CD8-positive, alpha-beta T cell (primary cell): ENCODE measurements at regions of chr3 and their contacts with region 1.

Region 1: DNA sequence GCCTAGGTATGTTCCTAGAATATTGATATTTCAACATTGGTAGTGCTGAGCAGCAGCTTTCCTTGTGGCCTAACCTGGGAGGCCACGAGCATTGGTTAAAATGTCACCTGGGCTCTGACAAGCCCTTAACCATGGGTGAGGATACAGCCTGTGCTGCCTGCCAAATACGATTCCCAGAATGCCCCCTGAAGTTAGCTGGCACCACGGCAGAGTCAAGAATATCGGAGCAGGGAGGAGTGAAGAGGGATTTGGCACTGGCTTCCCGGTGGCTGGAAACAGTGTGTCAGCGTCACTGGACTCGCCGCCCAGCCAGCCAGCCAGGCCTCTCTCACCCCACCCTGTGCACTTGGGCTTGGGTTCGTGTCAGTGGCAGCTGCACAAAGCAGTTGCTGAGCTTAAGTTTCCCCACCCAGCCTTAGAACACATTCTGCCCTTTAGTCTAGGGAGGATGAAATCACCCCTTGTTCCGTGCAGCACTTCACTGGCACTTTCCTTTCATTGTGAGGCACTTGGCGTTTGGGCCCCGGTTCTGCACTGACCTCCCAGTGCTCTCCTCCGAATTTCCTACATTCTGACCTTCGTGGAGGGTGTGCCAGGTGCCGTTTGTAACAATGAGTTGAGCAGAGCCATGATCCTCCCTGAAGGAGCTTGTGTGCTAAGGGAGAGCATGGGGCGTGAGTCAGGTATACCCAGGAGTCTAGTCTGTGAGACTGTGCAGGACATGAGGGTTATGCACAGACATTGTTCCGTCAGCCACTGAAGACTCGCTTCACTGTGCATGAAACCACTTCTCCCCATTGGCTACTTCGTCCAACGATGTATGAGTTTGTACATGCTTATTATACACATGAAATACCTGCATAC is 152.8 kb upstream of the BHLHE40 start:
- DNase-seq: no peak
- ATAC-seq: no peak
- H3K4me3 ChIP-seq: peak overlapping the region in 1 of 2 experiments; percentile 0
- H3K4me3 Mint-ChIP-seq: peak overlapping the region; percentile 64
- H3K27ac ChIP-seq: no peak overlapping the region
- H3K27ac Mint-ChIP-seq: no peak overlapping the region
- H3K4me1 ChIP-seq: peaks cover 82% of the 10 kb centered on the region
- H3K4me1 Mint-ChIP-seq: peaks cover 94% of the 10 kb centered on the region
- H3K27me3 ChIP-seq: no peaks in the 10 kb centered on the region
- H3K27me3 Mint-ChIP-seq: no peaks in the 10 kb centered on the region
- CTCF ChIP-seq: no peak

Region 2: GRCh38 chr3:4722103-4722502 is 104.4 kb before region 1 on chr3:
- CTCF ChIA-PET with region 1: no interaction called
- POLR2A ChIA-PET with region 1: no interaction called
- intact Hi-C with region 1: no loop called
- DNase-seq: peak in 2 of 9 experiments; percentile 38 to 52
- ATAC-seq: no peak
- H3K4me3 ChIP-seq: no peak overlapping the region
- H3K4me3 Mint-ChIP-seq: no peak overlapping the region
- H3K27ac ChIP-seq: no peak overlapping the region
- H3K27ac Mint-ChIP-seq: no peak overlapping the region
- H3K4me1 ChIP-seq: no peaks in the 10 kb centered on the region
- H3K4me1 Mint-ChIP-seq: no peaks in the 10 kb centered on the region
- H3K27me3 ChIP-seq: no peaks in the 10 kb centered on the region
- H3K27me3 Mint-ChIP-seq: no peaks in the 10 kb centered on the region
- CTCF ChIP-seq: no peak

Region 3: DNA sequence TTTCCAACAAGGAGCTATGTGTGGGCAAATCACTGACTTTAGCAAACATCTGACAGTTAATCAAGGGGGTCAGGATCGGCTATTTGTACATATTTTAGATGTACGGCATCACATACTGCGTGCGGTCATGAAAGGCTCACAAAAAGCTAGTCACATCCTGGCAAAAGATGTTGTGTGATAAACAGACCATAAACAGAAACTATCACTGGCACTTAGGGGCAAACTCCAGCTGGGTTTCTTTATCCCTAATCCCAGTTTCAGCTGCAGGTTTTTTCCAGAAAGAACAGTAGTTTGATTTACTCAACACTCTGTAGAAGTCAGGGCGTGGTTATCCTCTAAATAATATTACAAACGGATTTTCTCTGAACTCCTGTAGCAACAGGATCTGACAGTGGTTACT is 40.4 kb after region 1 on chr3:
- CTCF ChIA-PET with region 1: interaction called, 3 read pairs
- POLR2A ChIA-PET with region 1: interaction called, 3 read pairs
- intact Hi-C with region 1: loop called in 1 of 2 experiments (anchors 5 kb)
- DNase-seq: peak in 2 of 9 experiments; percentile 47 to 61
- ATAC-seq: no peak
- H3K4me3 ChIP-seq: no peak overlapping the region
- H3K4me3 Mint-ChIP-seq: peak overlapping the region; percentile 84
- H3K27ac ChIP-seq: peak overlapping the region; percentile 67 to 83
- H3K27ac Mint-ChIP-seq: peak overlapping the region; percentile 94
- H3K4me1 ChIP-seq: peaks cover 25% of the 10 kb centered on the region
- H3K4me1 Mint-ChIP-seq: peaks cover 34% of the 10 kb centered on the region
- H3K27me3 ChIP-seq: no peaks in the 10 kb centered on the region
- H3K27me3 Mint-ChIP-seq: no peaks in the 10 kb centered on the region
- CTCF ChIP-seq: no peak

Region 4: GRCh38 chr3:5016218-5017161 is 190.0 kb after region 1 on chr3:
- CTCF ChIA-PET with region 1: interaction called, 3 read pairs
- POLR2A ChIA-PET with region 1: no interaction called
- intact Hi-C with region 1: loop called in 1 of 2 experiments (anchors 2 kb)
- DNase-seq: peak in 8 of 9 experiments; percentile 32 to 77 (median 58)
- ATAC-seq: peak; percentile 53
- H3K4me3 ChIP-seq: no peak overlapping the region
- H3K4me3 Mint-ChIP-seq: no peak overlapping the region
- H3K27ac ChIP-seq: peak overlapping the region in 1 of 2 experiments; percentile 1
- H3K27ac Mint-ChIP-seq: peak overlapping the region; percentile 77
- H3K4me1 ChIP-seq: peaks cover 24% of the 10 kb centered on the region
- H3K4me1 Mint-ChIP-seq: peaks cover 42% of the 10 kb centered on the region
- H3K27me3 ChIP-seq: no peaks in the 10 kb centered on the region
- H3K27me3 Mint-ChIP-seq: peaks cover 2% of the 10 kb centered on the region
- CTCF ChIP-seq: no peak

Region 5: DNA sequence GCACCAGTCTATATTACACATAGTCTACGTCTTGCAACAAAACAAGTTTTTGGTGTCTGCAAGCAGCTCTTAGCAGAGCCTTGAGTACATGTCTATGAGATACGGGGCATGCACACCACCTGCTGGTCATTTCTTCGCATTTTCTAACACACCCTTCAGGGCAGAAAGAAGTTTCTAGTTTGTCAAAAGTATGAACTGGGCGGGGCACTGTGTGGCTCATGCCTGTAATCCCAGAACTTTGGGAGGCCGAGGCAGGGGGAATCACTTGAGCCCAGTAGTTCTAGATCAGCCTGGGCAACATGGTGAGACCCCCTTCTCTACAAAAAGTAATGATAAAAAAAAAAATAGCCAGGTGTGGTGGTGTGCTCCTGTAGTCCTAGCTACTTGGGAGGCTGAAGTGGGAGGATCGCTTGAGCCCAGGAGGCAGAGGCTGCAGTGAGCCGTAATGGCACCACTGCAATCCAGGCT is 231.4 kb after region 1 on chr3:
- CTCF ChIA-PET with region 1: interaction called, 9 read pairs
- POLR2A ChIA-PET with region 1: interaction called, 3 read pairs
- intact Hi-C with region 1: loop called (anchors 1 to 2 kb)
- DNase-seq: peak; percentile 34 to 87 (median 69)
- ATAC-seq: peak; percentile 96
- H3K4me3 ChIP-seq: no peak overlapping the region
- H3K4me3 Mint-ChIP-seq: no peak overlapping the region
- H3K27ac ChIP-seq: no peak overlapping the region
- H3K27ac Mint-ChIP-seq: no peak overlapping the region
- H3K4me1 ChIP-seq: no peaks in the 10 kb centered on the region
- H3K4me1 Mint-ChIP-seq: no peaks in the 10 kb centered on the region
- H3K27me3 ChIP-seq: peaks cover 0 to 4% of the 10 kb centered on the region in 2 experiments
- H3K27me3 Mint-ChIP-seq: peaks cover 2% of the 10 kb centered on the region
- CTCF ChIP-seq: peak; percentile 63

Region 6: GRCh38 chr3:5874931-5875341 is 1048.5 kb after region 1 on chr3:
- CTCF ChIA-PET with region 1: no interaction called
- POLR2A ChIA-PET with region 1: no interaction called
- intact Hi-C with region 1: no loop called
- DNase-seq: no peak
- ATAC-seq: no peak
- H3K4me3 ChIP-seq: no peak overlapping the region
- H3K4me3 Mint-ChIP-seq: no peak overlapping the region
- H3K27ac ChIP-seq: no peak overlapping the region
- H3K27ac Mint-ChIP-seq: no peak overlapping the region
- H3K4me1 ChIP-seq: no peaks in the 10 kb centered on the region
- H3K4me1 Mint-ChIP-seq: no peaks in the 10 kb centered on the region
- H3K27me3 ChIP-seq: no peaks in the 10 kb centered on the region
- H3K27me3 Mint-ChIP-seq: no peaks in the 10 kb centered on the region
- CTCF ChIP-seq: no peak